Activated CD4-positive, alpha-beta memory T cell treated with anti-CD3 and anti-CD28 coated beads for 36 hours (primary cell): ENCODE measurements at regions of chr3 and their contacts with region 1.

Region 1: GRCh38 chr3:67654099-67654843 is at the start of gene SUCLG2:
- DNase-seq: peak; percentile 91
- H3K4me3 Mint-ChIP-seq: peak within 1 kb of the TSS; percentile 76
- H3K27ac Mint-ChIP-seq: peak within 1 kb of the TSS; percentile 82
- H3K4me1 Mint-ChIP-seq: peaks cover 58% of the 10 kb centered on the region
- H3K27me3 Mint-ChIP-seq: no peaks in the 10 kb centered on the region
- total RNA-seq, gene SUCLG2: 53.3 to 57.8 TPM

Region 2: DNA sequence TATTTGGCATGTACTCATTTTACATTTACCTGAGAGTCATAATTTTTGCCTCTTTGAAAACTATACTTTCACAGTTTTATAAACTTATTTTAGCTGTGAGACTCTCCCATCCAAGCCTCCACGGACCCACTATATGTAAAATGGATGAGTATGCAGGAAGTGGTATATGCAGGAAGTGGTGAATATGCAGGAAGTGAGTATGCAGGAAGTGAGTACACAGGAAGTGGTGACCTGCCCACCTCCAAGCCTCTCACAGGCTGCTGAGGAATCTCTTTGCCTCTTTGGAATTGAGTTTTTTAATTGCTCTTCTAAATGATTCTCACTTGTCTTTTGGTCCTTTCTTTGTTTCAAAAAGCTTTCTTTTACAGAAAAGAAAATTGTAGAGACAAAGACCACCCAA is 571.0 kb before region 1 on chr3:
- CTCF ChIA-PET with region 1: no interaction called
- POLR2A ChIA-PET with region 1: no interaction called
- intact Hi-C with region 1: loop called (anchors 10 kb)
- DNase-seq: peak; percentile 71
- H3K4me3 Mint-ChIP-seq: peak overlapping the region; percentile 20
- H3K27ac Mint-ChIP-seq: peak overlapping the region; percentile 83
- H3K4me1 Mint-ChIP-seq: peaks cover 21% of the 10 kb centered on the region
- H3K27me3 Mint-ChIP-seq: no peaks in the 10 kb centered on the region

Region 3: DNA sequence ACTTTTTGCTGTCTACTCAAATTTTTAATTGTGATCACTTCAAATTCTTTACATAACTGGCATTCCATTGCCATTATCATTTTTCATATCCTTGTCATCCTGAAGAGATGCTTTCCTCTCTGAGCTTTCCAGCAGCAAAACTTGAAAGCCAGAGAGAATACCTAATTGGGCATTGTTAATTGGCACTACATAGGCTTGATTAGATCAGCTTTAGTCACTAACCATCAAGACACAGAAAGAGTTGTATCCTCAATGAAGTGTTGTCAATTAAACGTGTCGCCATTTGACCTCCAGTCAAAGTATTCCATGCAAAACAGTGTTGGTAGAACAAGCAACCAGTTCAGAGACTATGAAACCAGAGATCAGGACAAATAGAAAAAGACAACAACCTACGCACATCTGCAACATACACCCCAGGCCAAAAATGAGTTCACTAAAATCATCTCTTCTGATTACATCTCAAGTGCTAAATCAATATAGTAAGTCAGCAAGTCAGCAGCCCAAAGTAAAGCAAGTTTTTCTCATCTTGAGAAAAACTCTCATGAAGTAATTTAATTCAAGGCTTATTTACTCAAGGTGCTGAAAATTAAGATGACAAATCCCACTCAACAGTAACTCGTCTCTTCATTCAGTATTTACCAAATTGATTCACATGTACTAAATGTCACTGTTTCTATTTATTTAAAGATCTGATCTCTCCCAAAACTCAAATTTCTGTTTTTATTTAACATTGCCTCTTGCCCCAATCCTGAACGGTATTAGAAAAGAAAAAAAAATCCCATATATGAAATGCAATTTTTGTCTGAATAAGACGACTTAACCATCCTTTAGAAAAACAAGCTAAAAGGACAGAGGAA is 122.8 kb before region 1 on chr3:
- CTCF ChIA-PET with region 1: no interaction called
- POLR2A ChIA-PET with region 1: no interaction called
- intact Hi-C with region 1: no loop called
- DNase-seq: no peak
- H3K4me3 Mint-ChIP-seq: no peak overlapping the region
- H3K27ac Mint-ChIP-seq: no peak overlapping the region
- H3K4me1 Mint-ChIP-seq: peaks cover 24% of the 10 kb centered on the region
- H3K27me3 Mint-ChIP-seq: no peaks in the 10 kb centered on the region

Region 4: DNA sequence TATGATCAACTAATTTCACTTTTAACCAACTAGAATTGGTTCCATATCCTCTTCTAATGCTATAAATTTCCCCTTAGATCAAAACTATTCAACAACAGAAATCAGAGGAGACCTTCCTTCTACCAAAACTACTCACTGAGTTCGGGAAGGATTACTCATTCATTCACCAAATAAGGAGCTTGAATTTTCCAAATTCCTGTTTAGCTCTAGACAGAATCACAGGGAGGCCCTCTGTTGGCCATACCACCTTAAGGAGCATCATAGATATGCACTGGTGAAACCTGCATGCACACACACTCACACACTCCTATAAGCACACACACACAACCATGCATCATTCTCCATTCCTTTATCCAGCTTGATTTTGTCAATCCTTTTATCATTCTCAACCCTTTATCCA is 48.9 kb before region 1 on chr3:
- CTCF ChIA-PET with region 1: interaction called, 3 read pairs
- POLR2A ChIA-PET with region 1: no interaction called
- intact Hi-C with region 1: loop called (anchors 1 kb)
- DNase-seq: no peak
- H3K4me3 Mint-ChIP-seq: no peak overlapping the region
- H3K27ac Mint-ChIP-seq: peak overlapping the region; percentile 31
- H3K4me1 Mint-ChIP-seq: peaks cover 48% of the 10 kb centered on the region
- H3K27me3 Mint-ChIP-seq: no peaks in the 10 kb centered on the region

Region 5: DNA sequence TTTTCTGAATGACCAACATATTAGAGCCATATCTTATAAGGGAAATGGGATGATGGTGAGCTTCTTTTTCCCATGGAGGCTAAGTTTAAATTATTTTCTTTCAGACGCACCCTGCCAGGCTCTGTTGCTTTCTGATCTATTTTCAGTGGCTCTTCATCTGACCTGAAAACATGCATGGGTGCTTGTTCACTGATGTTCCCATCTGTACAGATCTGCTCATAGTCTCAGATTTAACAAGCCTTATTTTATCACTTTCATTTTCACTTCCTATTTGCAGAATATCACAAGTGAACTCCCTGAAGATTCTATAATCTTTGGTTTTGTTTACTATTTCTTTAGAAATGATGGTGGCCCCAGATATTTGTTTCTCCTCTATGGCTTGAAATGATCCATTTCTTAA is 31.2 kb after region 1 on chr3:
- CTCF ChIA-PET with region 1: interaction called, 5 read pairs
- POLR2A ChIA-PET with region 1: no interaction called
- intact Hi-C with region 1: loop called (anchors 1 kb)
- DNase-seq: no peak
- H3K4me3 Mint-ChIP-seq: no peak overlapping the region
- H3K27ac Mint-ChIP-seq: no peak overlapping the region
- H3K4me1 Mint-ChIP-seq: peaks cover 25% of the 10 kb centered on the region
- H3K27me3 Mint-ChIP-seq: no peaks in the 10 kb centered on the region

Region 6: GRCh38 chr3:67745296-67745695 is 91.0 kb after region 1 on chr3:
- CTCF ChIA-PET with region 1: no interaction called
- POLR2A ChIA-PET with region 1: no interaction called
- intact Hi-C with region 1: no loop called
- DNase-seq: no peak
- H3K4me3 Mint-ChIP-seq: no peak overlapping the region
- H3K27ac Mint-ChIP-seq: no peak overlapping the region
- H3K4me1 Mint-ChIP-seq: peaks cover 3% of the 10 kb centered on the region
- H3K27me3 Mint-ChIP-seq: no peaks in the 10 kb centered on the region

Region 7: GRCh38 chr3:69084326-69085167 is 1430.3 kb after region 1 on chr3 and contains the start of gene ARL6IP5:
- CTCF ChIA-PET with region 1: no interaction called
- POLR2A ChIA-PET with region 1: no interaction called
- intact Hi-C with region 1: loop called (anchors 2 kb)
- DNase-seq: peak; percentile 96
- H3K4me3 Mint-ChIP-seq: peak within 1 kb of the TSS; percentile 97
- H3K27ac Mint-ChIP-seq: peak within 1 kb of the TSS; percentile 97
- H3K4me1 Mint-ChIP-seq: peaks cover 57% of the 10 kb centered on the region
- H3K27me3 Mint-ChIP-seq: no peaks in the 10 kb centered on the region
- total RNA-seq, gene ARL6IP5: 93.9 to 94.8 TPM